ENCODE measurements at regions of chr19 and their contacts with region 1.

Region 1: DNA sequence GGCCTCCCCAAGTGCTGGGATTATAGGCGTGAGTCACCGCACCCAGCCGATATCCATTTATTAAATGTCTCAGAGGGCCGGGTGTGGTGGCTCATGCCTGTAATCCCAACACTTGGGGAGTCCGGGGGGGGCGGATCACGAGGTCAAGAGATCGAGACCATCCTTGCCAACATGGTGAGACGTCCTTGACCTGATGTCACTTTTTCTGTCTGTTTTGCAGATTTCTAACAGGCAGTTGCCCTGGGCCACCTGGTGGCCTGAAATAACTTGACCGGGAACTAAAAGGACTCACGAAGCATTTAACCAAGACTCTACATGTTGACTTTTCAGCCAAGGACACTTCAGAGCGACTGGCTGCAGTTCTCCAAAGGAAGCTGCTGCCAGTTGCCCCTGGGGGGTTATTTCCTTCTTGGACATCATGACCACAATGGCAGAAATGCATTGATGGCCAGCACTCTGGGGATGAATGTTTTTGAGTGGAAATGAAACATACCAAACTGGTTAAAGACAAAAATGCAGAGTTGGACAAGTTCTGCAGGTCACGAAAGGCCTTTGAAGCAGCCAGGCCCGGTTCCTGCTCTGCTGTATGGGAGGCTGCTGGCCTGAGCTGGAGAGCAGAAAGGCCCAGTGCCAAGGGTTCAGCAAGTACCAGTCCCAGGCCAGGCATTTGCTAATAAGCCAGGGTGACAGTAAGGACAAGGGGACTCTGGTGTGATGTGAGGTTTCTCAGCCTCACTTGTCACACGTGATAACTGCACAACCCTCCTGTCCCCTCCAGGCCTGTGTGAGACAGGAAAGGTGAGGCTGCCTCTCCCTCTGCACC is 8.3 kb downstream of the ZNF837 start:
- DNase-seq: no peak
- ATAC-seq: peak; percentile 48; the same call in 1 of the 2 replicates
- H3K4me3 ChIP-seq: no peak overlapping the region
- H3K27ac ChIP-seq: no peak overlapping the region
- H3K4me1 ChIP-seq: no peaks in the 10 kb centered on the region
- H3K27me3 ChIP-seq: no peaks in the 10 kb centered on the region
- CTCF ChIP-seq: no peak

Region 2: DNA sequence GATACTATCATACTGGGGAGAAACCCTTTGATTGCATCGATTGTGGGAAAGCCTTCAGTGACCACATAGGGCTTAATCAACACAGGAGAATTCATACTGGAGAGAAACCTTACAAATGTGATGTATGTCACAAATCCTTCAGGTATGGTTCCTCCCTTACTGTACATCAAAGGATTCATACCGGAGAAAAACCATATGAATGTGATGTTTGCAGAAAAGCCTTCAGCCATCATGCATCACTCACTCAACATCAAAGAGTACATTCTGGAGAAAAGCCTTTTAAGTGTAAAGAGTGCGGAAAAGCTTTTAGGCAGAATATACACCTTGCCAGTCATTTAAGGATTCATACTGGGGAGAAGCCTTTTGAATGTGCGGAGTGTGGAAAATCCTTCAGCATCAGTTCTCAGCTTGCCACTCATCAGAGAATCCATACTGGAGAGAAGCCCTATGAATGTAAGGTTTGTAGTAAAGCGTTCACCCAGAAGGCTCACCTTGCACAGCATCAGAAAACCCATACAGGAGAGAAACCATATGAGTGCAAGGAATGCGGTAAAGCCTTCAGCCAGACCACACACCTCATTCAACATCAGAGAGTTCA is 1818.2 kb before region 1 on chr19:
- CTCF ChIA-PET with region 1: no interaction called
- POLR2A ChIA-PET with region 1: interaction called, 14 read pairs
- in situ Hi-C with region 1: no loop called
- intact Hi-C with region 1: no loop called
- DNase-seq: no peak
- ATAC-seq: no peak
- H3K4me3 ChIP-seq: no peak overlapping the region
- H3K27ac ChIP-seq: no peak overlapping the region
- H3K4me1 ChIP-seq: no peaks in the 10 kb centered on the region
- H3K27me3 ChIP-seq: no peaks in the 10 kb centered on the region
- CTCF ChIP-seq: no peak